Activated CD8-positive, alpha-beta T cell treated with anti-CD3 and anti-CD28 coated beads for 36 hours (primary cell): ENCODE measurements at regions of chr5 and their contacts with region 1.

Region 1: GRCh38 chr5:81506900-81507588 is 113.1 kb upstream of the ACOT12 start:
- DNase-seq: peak; percentile 58
- ATAC-seq: peak; percentile 93
- H3K4me3 Mint-ChIP-seq: no peak overlapping the region
- H3K27ac Mint-ChIP-seq: no peak overlapping the region
- H3K4me1 Mint-ChIP-seq: peaks cover 1% of the 10 kb centered on the region
- H3K27me3 Mint-ChIP-seq: no peaks in the 10 kb centered on the region
- CTCF ChIP-seq: peak; percentile 80

Region 2: GRCh38 chr5:81751009-81751835 is 244.2 kb after region 1 on chr5 and contains the start of gene SSBP2:
- CTCF ChIA-PET with region 1: interaction called, 3 read pairs
- POLR2A ChIA-PET with region 1: interaction called, 3 read pairs
- intact Hi-C with region 1: loop called (anchors 5 kb)
- DNase-seq: peak; percentile 95
- ATAC-seq: peak; percentile 93
- H3K4me3 Mint-ChIP-seq: peak within 1 kb of the TSS; percentile 87
- H3K27ac Mint-ChIP-seq: peak within 1 kb of the TSS; percentile 85
- H3K4me1 Mint-ChIP-seq: peaks cover 26% of the 10 kb centered on the region
- H3K27me3 Mint-ChIP-seq: peaks cover 3% of the 10 kb centered on the region
- CTCF ChIP-seq: no peak
- total RNA-seq, gene SSBP2: 11.7 to 12.9 TPM

Region 3: DNA sequence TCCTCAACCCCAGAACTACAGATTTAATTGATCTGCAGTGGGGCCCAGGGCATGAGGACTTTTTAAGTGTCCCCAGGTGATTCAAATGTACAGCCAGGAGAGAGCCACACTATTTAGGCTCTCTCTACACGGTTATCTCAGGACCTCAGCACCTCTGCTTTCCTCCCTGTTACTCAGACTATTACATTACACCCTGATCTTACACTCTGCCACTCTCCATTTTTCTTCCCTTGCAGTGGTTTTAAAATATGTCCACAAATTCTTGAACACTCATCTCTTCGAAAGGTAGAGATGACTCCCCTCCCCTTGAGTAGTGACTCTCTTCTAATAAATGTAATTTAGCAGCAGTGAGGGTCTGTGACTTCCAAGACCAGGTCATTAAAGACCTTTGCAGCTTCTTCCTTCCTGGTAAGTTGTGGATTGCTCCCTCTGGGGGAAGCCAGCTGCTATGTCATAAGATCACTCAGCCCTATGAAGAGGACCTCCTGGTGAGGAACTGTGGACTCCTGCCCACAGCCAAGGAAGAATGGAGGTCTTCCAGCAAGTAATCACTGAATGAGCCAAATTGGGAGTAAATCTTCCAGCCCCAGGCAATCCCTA is 331.4 kb after region 1 on chr5:
- CTCF ChIA-PET with region 1: interaction called, 10 read pairs
- POLR2A ChIA-PET with region 1: no interaction called
- intact Hi-C with region 1: no loop called
- DNase-seq: peak; percentile 39
- ATAC-seq: peak; percentile 72
- H3K4me3 Mint-ChIP-seq: no peak overlapping the region
- H3K27ac Mint-ChIP-seq: no peak overlapping the region
- H3K4me1 Mint-ChIP-seq: no peaks in the 10 kb centered on the region
- H3K27me3 Mint-ChIP-seq: no peaks in the 10 kb centered on the region
- CTCF ChIP-seq: peak; percentile 53

Region 4: GRCh38 chr5:81851481-81852178 is 344.6 kb after region 1 on chr5:
- CTCF ChIA-PET with region 1: interaction called, 5 read pairs
- POLR2A ChIA-PET with region 1: no interaction called
- intact Hi-C with region 1: loop called (anchors 5 kb)
- DNase-seq: peak; percentile 92
- ATAC-seq: peak; percentile 89
- H3K4me3 Mint-ChIP-seq: peak overlapping the region; percentile 83
- H3K27ac Mint-ChIP-seq: peak overlapping the region; percentile 96
- H3K4me1 Mint-ChIP-seq: peaks cover 40% of the 10 kb centered on the region
- H3K27me3 Mint-ChIP-seq: no peaks in the 10 kb centered on the region
- CTCF ChIP-seq: no peak

Region 5: DNA sequence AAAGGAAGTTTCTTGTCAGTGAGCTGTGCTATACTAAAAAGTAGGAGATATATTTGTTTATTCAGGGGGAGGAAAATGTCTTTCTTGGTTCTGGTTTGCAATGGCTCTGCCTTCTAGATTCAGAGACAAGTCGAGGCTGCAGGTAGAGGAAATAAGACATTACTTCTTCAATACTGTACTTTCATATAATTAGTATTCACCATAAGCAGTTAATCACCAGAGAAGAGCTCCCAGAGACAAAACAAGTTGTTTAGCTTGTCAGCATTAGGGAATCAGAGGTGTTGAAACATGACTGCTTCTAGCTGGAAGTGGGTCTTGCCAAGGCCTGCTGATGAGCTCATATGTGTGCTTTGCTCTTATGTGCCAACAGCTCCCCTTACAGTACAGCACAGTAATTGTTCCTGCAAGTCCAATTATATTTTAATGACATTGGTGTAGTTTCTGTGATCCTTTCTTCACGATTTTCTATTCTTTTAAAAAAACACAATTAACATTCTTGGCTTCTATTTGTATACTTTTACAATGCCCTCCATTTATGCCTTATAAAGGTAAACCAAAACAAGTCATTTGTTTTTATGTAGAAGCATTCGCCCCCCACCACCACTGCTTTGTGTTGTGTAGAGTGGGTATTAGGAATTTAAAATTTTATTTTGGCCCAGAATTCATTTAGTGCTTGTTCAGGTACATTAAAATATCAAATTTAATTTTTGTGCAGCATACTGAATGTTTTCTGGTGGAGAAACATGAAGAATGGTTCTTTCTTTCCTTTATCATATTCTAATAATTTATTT is 658.9 kb after region 1 on chr5:
- CTCF ChIA-PET with region 1: interaction called, 11 read pairs
- POLR2A ChIA-PET with region 1: no interaction called
- intact Hi-C with region 1: loop called (anchors 10 kb)
- DNase-seq: peak; percentile 47
- ATAC-seq: peak; percentile 95
- H3K4me3 Mint-ChIP-seq: no peak overlapping the region
- H3K27ac Mint-ChIP-seq: no peak overlapping the region
- H3K4me1 Mint-ChIP-seq: peaks cover 8% of the 10 kb centered on the region
- H3K27me3 Mint-ChIP-seq: no peaks in the 10 kb centered on the region
- CTCF ChIP-seq: peak; percentile 62

Region 6: DNA sequence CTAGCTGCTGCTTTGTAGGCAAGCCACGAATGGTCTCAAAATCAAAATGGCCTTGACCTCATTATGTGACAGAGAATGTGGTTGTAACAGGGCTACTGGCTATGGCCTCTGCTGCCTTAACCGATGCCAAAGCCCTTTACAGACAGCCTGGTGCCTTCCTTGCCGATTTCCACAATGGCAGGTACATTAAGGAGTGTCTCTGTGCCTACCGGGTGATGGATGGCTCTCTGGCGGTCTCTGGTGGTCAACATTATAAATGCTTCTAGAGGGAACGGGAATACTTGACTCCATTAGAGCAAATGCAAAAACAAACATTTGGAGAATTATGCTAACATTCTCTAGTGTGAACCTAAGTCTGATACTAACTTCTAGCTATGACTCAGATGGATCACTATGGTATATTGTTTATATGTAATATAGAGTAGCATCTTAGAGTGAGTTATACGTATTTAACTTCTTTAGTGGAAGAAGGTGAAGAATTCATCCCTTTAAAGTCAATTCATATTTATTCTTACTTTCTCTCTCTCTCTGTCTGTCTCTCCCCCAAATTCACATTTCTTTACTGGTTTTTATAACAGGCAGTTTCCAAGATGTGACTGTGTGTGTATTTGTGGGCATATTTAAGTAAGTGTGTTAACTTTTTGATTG is 718.6 kb after region 1 on chr5:
- CTCF ChIA-PET with region 1: interaction called, 3 read pairs
- POLR2A ChIA-PET with region 1: no interaction called
- intact Hi-C with region 1: loop called (anchors 5 kb)
- DNase-seq: peak; percentile 73
- ATAC-seq: peak; percentile 90
- H3K4me3 Mint-ChIP-seq: no peak overlapping the region
- H3K27ac Mint-ChIP-seq: no peak overlapping the region
- H3K4me1 Mint-ChIP-seq: peaks cover 3% of the 10 kb centered on the region
- H3K27me3 Mint-ChIP-seq: no peaks in the 10 kb centered on the region
- CTCF ChIP-seq: peak; percentile 86